ENCODE measurements at regions of chr7 and their contacts with region 1.

Region 1: GRCh38 chr7:45089341-45089891 is 647 bp upstream of the NACAD start:
- DNase-seq: peak; percentile 67
- H3K4me3 ChIP-seq: peak overlapping the region; percentile 56
- H3K27ac ChIP-seq: no peak overlapping the region
- H3K4me1 ChIP-seq: no peaks in the 10 kb centered on the region
- H3K27me3 ChIP-seq: no peaks in the 10 kb centered on the region
- CTCF ChIP-seq: no peak

Region 2: GRCh38 chr7:44973610-44974401 is 115.6 kb before region 1 on chr7:
- CTCF ChIA-PET with region 1: interaction called, 10 read pairs
- POLR2A ChIA-PET with region 1: no interaction called
- intact Hi-C with region 1: no loop called
- DNase-seq: peak; percentile 50
- H3K4me3 ChIP-seq: no peak overlapping the region
- H3K27ac ChIP-seq: no peak overlapping the region
- H3K4me1 ChIP-seq: peaks cover 10% of the 10 kb centered on the region
- H3K27me3 ChIP-seq: no peaks in the 10 kb centered on the region
- CTCF ChIP-seq: peak; percentile 64